ENCODE measurements at regions of chr17 and their contacts with region 1.

Region 1: DNA sequence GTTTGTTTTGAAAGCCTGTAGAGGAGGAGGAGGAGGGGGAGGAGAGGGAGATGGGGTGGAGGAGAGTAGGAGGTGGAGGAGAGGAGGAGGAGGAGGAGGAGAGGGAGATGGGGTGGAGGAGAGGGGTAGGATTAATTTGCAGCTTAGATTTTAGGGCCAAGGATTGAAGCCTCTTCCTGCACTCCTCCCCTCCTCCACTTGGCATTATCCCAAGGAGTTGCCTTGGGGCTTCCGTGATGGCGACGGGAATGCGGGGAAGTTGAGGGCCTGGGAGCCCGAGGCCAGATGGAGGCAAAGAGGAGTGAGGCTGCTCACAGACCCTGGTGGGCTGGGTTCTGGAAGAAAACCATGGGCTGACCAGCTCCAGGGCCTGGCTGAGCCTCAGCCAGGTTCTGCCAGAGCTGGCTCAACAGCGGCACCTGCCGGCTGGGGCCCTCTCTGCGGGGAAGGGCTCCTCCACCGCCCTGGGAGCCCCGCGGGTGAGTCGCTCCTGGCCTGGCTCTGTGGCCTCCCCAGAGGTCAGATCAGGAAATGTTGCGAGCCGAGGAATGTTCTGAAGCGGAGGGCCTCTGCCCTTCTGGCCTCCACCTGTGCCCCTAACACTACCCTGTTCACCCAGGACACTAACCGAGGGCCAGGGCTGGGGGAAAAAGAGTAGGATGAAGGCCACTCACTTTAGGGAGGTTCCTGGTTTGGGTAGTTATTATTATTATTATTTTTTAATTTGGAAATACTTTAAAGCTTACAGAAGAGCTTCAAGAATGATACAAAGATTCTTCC is 23.9 kb upstream of the FMNL1 start:
- DNase-seq: peak; percentile 89 to 93
- H3K4me3 ChIP-seq: no peak overlapping the region
- H3K27ac ChIP-seq: peak overlapping the region; percentile 78 to 81
- H3K4me1 ChIP-seq: peaks cover 0 to 4% of the 10 kb centered on the region in 2 donors
- H3K27me3 ChIP-seq: no peaks in the 10 kb centered on the region
- CTCF ChIP-seq: peak; percentile 99 to 100 (median 99)
- POLR2A ChIP-seq: peak in 1 of 2 donors; percentile 28

Region 2: DNA sequence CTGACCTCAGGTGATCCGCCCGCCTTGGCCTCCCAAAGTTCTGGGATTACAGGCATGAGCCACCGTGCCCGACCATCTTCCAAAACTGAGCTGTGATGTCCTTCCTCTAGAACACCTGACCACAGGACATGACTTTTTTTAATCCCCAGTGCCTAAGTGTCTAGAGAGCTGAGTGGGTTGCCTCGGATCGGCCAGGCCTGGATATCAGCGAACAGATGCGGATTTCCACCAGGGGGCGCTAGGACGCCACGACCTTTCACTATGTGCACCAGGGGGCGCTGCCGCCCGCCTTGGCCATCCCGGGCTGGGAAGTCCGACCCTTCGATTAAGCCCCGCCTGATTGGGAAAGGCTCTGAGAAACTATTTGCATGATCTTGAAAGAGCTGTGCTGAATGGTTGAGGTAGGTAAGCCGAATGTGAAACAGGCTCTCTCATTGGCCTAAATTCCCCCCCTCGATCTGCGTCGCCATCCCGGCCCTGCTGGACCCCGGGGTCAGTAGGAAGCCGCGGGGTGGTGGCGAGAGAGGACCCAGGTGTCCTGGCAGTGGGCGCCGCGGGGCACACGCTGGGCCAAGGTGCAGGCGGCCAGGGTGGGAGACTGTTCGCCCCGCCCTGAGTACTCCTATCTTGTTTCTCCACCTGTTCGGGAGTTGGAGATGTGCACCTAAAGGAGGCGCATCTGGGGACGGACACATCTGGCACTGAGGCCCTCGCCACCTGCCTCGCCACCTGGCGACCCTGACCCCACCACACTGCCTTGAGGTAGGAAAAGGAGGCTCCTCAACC is 62.4 kb before region 1 on chr17 and contains the start of gene ACBD4:
- intact Hi-C with region 1: loop called (anchors 5 kb)
- DNase-seq: peak; percentile 97
- H3K4me3 ChIP-seq: peak within 1 kb of the TSS; percentile 68 to 83
- H3K27ac ChIP-seq: peak within 1 kb of the TSS; percentile 90 to 94
- H3K4me1 ChIP-seq: peaks cover 8% of the 10 kb centered on the region in 2 donors
- H3K27me3 ChIP-seq: no peaks in the 10 kb centered on the region
- CTCF ChIP-seq: peak; percentile 99 to 100 (median 100)
- POLR2A ChIP-seq: peak; percentile 44 to 65
- total RNA-seq, gene ACBD4: 7.8 to 37.7 (median 26.1) TPM

Measured in uterus (tissue), 4 donors.